ENCODE measurements at regions of chr1 and their contacts with region 1.

Region 1: DNA sequence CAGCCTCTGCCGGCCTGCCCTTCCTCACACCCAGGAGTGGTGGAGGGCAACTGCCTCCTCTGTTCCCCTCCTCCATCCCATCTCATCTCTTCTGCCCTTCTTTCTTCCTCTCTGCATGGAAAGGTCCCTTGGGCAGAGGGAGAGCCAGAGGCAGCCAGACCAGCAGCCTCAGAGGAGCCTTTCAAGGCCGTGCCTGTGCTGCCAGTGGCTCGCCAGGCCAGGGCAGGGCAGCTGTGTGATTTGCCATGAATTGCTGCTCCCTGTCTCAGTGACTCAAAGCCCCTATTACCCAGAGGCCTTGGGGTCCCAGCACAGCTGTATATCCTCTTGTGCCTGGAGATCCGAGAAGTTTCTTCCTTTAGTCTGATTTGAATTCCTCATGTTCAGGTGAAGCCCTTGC is 21.9 kb downstream of the TMCC2 start:
- DNase-seq: no peak
- H3K4me3 ChIP-seq: no peak overlapping the region
- H3K27ac ChIP-seq: peak overlapping the region; percentile 11 to 70
- H3K4me1 ChIP-seq: peaks cover 49% of the 10 kb centered on the region
- H3K27me3 ChIP-seq: no peaks in the 10 kb centered on the region
- CTCF ChIP-seq: no peak
- EP300 ChIP-seq: no peak
- POLR2A ChIP-seq: no peak

Region 2: DNA sequence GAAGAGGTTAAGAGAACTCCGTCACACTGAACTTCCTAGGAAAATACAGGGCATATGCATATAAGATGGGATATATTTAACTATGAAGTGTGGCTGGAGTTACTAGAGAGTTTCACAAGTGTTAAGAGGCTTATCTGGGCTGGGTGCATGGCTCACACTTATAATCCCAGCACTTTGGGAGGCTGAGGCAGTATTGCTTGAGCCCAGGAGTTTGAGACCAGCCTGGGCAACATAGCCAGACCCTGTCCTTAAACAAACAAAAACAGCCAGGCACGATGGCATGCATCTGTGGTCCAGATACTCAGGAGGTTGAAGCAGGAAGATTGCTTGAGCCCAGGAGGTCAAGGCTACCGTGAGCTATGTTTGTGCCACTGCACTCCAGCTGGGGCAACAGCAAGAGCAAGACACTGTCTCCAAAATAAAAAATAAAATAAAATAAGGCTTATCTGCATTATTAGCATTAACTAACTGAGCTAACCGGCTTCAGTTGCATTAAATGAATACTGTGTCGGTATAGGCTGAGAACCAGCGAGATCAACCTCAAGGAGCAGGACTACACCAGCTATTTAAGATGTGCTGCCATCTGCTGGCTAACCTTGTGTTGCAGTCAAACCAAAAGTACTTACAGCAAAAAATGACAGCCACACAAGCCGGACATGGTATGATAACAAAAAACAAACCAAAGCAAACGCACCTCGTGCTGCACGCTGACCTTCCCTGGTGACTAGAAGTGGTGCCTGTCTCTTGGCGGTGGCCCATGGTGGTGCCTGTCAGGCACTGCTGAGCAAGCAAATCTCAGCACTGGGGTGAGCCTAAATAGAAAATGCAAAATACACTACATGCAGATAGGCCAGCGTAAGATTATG is 108.2 kb before region 1 on chr1:
- intact Hi-C with region 1: loop called in 2 of 4 experiments (anchors 5 to 10 kb)
- DNase-seq: peak; percentile 62 to 79 (median 71)
- H3K4me3 ChIP-seq: no peak overlapping the region
- H3K27ac ChIP-seq: no peak overlapping the region
- H3K4me1 ChIP-seq: peaks cover 3% of the 10 kb centered on the region
- H3K27me3 ChIP-seq: no peaks in the 10 kb centered on the region
- CTCF ChIP-seq: peak; percentile 54 to 63 (median 58)
- EP300 ChIP-seq: no peak
- POLR2A ChIP-seq: no peak

Region 3: DNA sequence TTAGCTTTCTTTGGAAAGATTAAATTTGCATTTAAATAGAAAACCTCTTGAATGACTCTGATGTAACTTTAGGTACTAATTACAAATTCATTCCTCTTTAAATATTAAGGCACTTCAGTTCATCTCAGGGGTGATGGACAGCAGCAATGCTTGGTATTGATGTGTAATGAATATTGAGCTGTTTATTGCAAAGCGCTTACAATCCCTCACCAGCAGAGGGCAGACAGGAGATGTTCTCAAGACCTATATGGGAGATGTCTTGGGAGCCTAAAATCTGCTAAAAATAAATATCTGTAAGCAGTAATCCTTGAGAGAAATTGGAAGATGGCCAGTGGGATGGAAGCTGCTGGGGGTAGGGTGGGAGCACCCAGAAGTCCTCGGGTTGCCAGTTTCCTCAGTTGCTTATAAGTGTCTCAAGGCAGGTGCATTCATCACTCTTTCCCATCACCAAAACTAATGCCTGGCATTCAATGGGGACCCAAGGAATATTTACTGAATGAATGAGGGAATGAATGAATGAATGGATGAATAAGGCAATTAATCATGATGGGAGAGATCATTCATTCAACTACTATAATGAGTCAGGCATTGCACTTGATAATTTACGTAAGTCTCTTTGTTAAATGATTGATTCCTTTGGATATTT is 104.7 kb after region 1 on chr1:
- intact Hi-C with region 1: no loop called
- DNase-seq: peak in 3 of 5 donors; percentile 63 to 81 (median 77)
- H3K4me3 ChIP-seq: no peak overlapping the region
- H3K27ac ChIP-seq: peak overlapping the region in 1 of 2 donors; percentile 84
- H3K4me1 ChIP-seq: peaks cover 10% of the 10 kb centered on the region
- H3K27me3 ChIP-seq: no peaks in the 10 kb centered on the region
- CTCF ChIP-seq: peak; percentile 70 to 88 (median 86)
- EP300 ChIP-seq: no peak
- POLR2A ChIP-seq: no peak